ENCODE measurements at regions of chr21 and their contacts with region 1.

Region 1: DNA sequence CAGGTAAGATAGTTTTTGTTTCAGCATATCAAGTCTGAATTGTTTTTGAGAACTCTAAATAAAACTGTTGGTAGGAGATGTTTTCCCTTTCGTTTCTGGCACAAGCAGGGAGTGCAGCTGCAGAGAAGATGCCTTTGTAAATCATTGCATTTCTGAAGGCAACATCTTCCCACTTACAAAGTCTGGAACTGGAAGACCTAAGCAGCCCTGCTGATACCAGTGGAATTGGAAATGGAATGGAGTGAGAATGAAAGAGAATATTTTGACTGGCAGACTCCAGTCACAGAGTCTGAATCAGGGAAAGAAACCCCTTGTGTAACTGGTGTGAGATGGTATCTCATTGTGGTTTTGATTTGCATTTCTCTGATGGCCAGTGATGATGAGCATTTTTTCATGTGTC is 815.6 kb downstream of the LTN1 start:
- DNase-seq: no peak
- H3K4me3 ChIP-seq: no peak overlapping the region
- H3K27ac ChIP-seq: no peak overlapping the region
- H3K4me1 ChIP-seq: no peaks in the 10 kb centered on the region
- H3K27me3 ChIP-seq: no peaks in the 10 kb centered on the region
- CTCF ChIP-seq: no peak
- POLR2A ChIP-seq: no peak

Region 2: GRCh38 chr21:28127175-28127785 is 49.8 kb before region 1 on chr21:
- intact Hi-C with region 1: loop called (anchors 2 kb)
- DNase-seq: no peak
- H3K4me3 ChIP-seq: no peak overlapping the region
- H3K27ac ChIP-seq: peak overlapping the region in 1 of 2 donors; percentile 49
- H3K4me1 ChIP-seq: no peaks in the 10 kb centered on the region
- H3K27me3 ChIP-seq: no peaks in the 10 kb centered on the region
- CTCF ChIP-seq: no peak
- POLR2A ChIP-seq: no peak

Region 3: DNA sequence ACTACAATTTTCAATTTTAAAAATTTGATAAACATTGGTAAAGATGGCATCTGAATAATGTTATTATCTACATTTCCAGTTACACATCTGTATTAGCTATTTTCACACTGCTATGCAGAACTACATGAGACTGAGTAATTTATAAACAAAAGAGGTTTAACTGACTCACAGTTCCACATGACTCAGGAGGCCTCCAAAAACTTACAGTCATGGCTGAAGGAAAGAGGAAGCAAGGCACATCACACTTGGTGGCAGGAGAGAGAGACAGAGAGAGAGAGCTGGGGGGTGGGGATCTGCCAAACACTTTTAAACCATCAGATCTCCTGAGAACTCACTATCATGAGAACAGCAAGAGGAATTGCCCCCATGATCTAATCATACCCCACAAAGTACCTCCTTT is 34.4 kb before region 1 on chr21:
- intact Hi-C with region 1: no loop called
- DNase-seq: no peak
- H3K4me3 ChIP-seq: no peak overlapping the region
- H3K27ac ChIP-seq: peak overlapping the region in 1 of 2 donors; percentile 15
- H3K4me1 ChIP-seq: no peaks in the 10 kb centered on the region
- H3K27me3 ChIP-seq: no peaks in the 10 kb centered on the region
- CTCF ChIP-seq: no peak
- POLR2A ChIP-seq: no peak

Region 4: GRCh38 chr21:28235169-28235895 is 58.2 kb after region 1 on chr21:
- intact Hi-C with region 1: no loop called
- DNase-seq: no peak
- H3K4me3 ChIP-seq: no peak overlapping the region
- H3K27ac ChIP-seq: no peak overlapping the region
- H3K4me1 ChIP-seq: no peaks in the 10 kb centered on the region
- H3K27me3 ChIP-seq: no peaks in the 10 kb centered on the region
- CTCF ChIP-seq: no peak
- POLR2A ChIP-seq: no peak

Region 5: GRCh38 chr21:28554660-28555475 is 377.7 kb after region 1 on chr21:
- intact Hi-C with region 1: loop called (anchors 10 kb)
- DNase-seq: no peak
- H3K4me3 ChIP-seq: no peak overlapping the region
- H3K27ac ChIP-seq: no peak overlapping the region
- H3K4me1 ChIP-seq: no peaks in the 10 kb centered on the region
- H3K27me3 ChIP-seq: no peaks in the 10 kb centered on the region
- CTCF ChIP-seq: no peak
- POLR2A ChIP-seq: no peak

Region 6: GRCh38 chr21:29928537-29928936 is 1751.4 kb after region 1 on chr21:
- intact Hi-C with region 1: no loop called
- DNase-seq: no peak
- H3K4me3 ChIP-seq: no peak overlapping the region
- H3K27ac ChIP-seq: no peak overlapping the region
- H3K4me1 ChIP-seq: no peaks in the 10 kb centered on the region
- H3K27me3 ChIP-seq: no peaks in the 10 kb centered on the region
- CTCF ChIP-seq: no peak
- POLR2A ChIP-seq: no peak